ENCODE measurements at regions of chr5 and their contacts with region 1.

Region 1: GRCh38 chr5:115309751-115310370 is 13.4 kb upstream of the CCDC112 start:
- DNase-seq: no peak
- H3K4me3 ChIP-seq: no peak overlapping the region
- H3K27ac ChIP-seq: no peak overlapping the region
- H3K4me1 ChIP-seq: no peaks in the 10 kb centered on the region
- H3K27me3 ChIP-seq: peaks cover 0 to 24% (median 0%) of the 10 kb centered on the region in 7 donors
- CTCF ChIP-seq: peak; percentile 29 to 73 (median 64)
- POLR2A ChIP-seq: no peak

Region 2: GRCh38 chr5:115571441-115571878 is 261.6 kb after region 1 on chr5:
- intact Hi-C with region 1: loop called (anchors 5 kb)
- DNase-seq: no peak
- H3K4me3 ChIP-seq: no peak overlapping the region
- H3K27ac ChIP-seq: no peak overlapping the region
- H3K4me1 ChIP-seq: peaks cover 0 to 7% (median 0%) of the 10 kb centered on the region in 6 donors
- H3K27me3 ChIP-seq: no peaks in the 10 kb centered on the region
- CTCF ChIP-seq: no peak
- POLR2A ChIP-seq: no peak

Region 3: DNA sequence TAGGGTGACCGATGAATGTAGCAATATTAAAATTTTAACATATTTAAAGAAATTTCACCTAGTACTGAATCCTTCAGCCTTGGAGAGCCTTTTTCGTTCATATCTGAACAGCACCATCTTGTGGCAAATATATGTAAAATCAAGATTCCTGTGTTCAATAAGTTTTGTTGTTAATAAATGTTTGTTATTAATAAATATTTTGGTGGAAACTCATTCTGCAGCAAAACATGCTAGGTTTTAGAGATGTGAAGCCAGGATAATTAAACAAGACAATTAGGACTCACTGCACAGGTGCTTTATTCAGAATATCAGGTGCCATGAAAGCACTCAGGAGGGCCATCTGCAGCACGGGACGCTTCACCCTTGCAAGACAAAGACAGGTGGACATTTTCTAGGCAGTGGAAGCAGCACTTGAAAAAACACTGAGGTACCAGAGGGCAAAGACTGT is 276.8 kb after region 1 on chr5:
- intact Hi-C with region 1: loop called (anchors 5 kb)
- DNase-seq: no peak
- H3K4me3 ChIP-seq: no peak overlapping the region
- H3K27ac ChIP-seq: no peak overlapping the region
- H3K4me1 ChIP-seq: peaks cover 0 to 11% (median 5%) of the 10 kb centered on the region in 6 donors
- H3K27me3 ChIP-seq: no peaks in the 10 kb centered on the region
- CTCF ChIP-seq: peak; percentile 18 to 72 (median 52)
- POLR2A ChIP-seq: no peak

Region 4: DNA sequence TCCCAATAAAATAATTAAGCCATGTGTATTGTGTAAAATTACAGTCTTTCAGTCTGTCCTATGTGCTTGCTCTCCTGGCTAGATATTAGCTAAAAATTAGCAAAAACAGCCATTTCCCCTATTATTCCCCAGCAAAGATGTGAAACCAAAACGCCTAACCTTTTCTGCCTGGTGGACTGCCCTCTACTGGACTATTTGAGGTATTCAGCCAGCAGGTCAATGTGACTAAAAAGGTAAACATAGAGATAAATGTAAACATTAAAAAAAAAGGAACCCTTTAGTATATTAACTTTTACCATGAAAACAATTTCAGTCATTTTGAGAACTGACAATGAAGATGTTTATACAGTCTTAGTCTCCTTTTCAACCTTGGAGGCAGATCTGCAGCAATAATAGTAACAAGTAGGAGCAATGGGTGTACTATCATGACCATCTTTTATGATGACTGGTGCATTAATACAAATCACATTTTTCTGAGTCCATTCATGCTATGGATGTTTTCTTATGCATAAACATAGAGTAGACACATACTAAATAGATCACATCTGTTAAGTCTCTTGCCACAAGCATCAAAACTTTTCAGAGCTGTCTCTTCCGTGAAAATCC is 521.4 kb after region 1 on chr5:
- intact Hi-C with region 1: loop called (anchors 10 kb)
- DNase-seq: no peak
- H3K4me3 ChIP-seq: no peak overlapping the region
- H3K27ac ChIP-seq: no peak overlapping the region
- H3K4me1 ChIP-seq: peaks cover 0 to 14% (median under 1%) of the 10 kb centered on the region in 6 donors
- H3K27me3 ChIP-seq: no peaks in the 10 kb centered on the region
- CTCF ChIP-seq: peak; percentile 37 to 79 (median 67)
- POLR2A ChIP-seq: no peak

Region 5: DNA sequence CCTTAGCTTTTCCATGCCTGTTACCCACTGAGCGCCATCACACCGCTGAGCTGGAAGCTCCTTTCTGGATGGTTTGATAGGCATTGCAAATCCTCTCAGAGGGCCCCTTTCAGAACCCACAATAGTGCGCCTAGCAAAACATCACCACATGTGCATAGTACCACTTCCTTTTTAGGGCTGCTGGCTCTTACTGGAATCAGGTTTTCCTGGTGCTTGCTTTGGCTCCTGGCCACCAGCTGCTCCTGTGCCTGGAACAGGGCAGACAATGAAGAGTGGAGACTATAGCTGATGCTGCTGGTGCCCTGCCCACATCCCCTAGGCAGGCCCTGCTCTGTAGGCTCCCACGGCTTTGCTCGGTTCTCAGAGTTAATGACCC is 1428.4 kb after region 1 on chr5:
- intact Hi-C with region 1: no loop called
- DNase-seq: no peak
- H3K4me3 ChIP-seq: no peak overlapping the region
- H3K27ac ChIP-seq: no peak overlapping the region
- H3K4me1 ChIP-seq: peaks cover 0 to 15% (median 0%) of the 10 kb centered on the region in 6 donors
- H3K27me3 ChIP-seq: no peaks in the 10 kb centered on the region
- CTCF ChIP-seq: no peak
- POLR2A ChIP-seq: no peak